ENCODE measurements at regions of chr16 and their contacts with region 1.

Region 1: GRCh38 chr16:68843482-68844210 is at the start of gene TANGO6:
- DNase-seq: peak; percentile 41
- ATAC-seq: peak; percentile 95
- H3K4me3 ChIP-seq: peak within 1 kb of the TSS; percentile 88
- H3K27ac ChIP-seq: peak within 1 kb of the TSS; percentile 91
- H3K4me1 ChIP-seq: peaks cover 9% of the 10 kb centered on the region
- H3K27me3 ChIP-seq: no peaks in the 10 kb centered on the region
- CTCF ChIP-seq: peak; percentile 36 to 43 (median 38); a peak in 4 of 6 replicates
- EP300 ChIP-seq: no peak
- POLR2A ChIP-seq: peak; percentile 97
- RAD21 ChIP-seq: no peak
- polyA plus RNA-seq, gene TANGO6: 1.1 to 2.0 TPM

Region 2: GRCh38 chr16:68244903-68245853 is 598.5 kb before region 1 on chr16 and contains the start of gene PLA2G15:
- CTCF ChIA-PET with region 1: no interaction called
- POLR2A ChIA-PET with region 1: no interaction called
- RAD21 ChIA-PET with region 1: no interaction called
- SMC1A ChIA-PET with region 1: no interaction called
- in situ Hi-C with region 1: no loop called
- intact Hi-C with region 1: loop called (anchors 5 kb)
- DNase-seq: no peak
- ATAC-seq: peak; percentile 98
- H3K4me3 ChIP-seq: peak within 1 kb of the TSS; percentile 97
- H3K27ac ChIP-seq: peak within 1 kb of the TSS; percentile 5; the same call in 1 of the 2 replicates
- H3K4me1 ChIP-seq: peaks cover 18% of the 10 kb centered on the region
- H3K27me3 ChIP-seq: no peaks in the 10 kb centered on the region
- CTCF ChIP-seq: no peak
- EP300 ChIP-seq: 0 out of 4 replicates have a peak, but pooled peaks of 1 of the 2 experiments have one; percentile 22
- POLR2A ChIP-seq: peak; percentile 87
- RAD21 ChIP-seq: no peak
- polyA plus RNA-seq, gene PLA2G15: 0.31 to 1.1 TPM

Region 3: DNA sequence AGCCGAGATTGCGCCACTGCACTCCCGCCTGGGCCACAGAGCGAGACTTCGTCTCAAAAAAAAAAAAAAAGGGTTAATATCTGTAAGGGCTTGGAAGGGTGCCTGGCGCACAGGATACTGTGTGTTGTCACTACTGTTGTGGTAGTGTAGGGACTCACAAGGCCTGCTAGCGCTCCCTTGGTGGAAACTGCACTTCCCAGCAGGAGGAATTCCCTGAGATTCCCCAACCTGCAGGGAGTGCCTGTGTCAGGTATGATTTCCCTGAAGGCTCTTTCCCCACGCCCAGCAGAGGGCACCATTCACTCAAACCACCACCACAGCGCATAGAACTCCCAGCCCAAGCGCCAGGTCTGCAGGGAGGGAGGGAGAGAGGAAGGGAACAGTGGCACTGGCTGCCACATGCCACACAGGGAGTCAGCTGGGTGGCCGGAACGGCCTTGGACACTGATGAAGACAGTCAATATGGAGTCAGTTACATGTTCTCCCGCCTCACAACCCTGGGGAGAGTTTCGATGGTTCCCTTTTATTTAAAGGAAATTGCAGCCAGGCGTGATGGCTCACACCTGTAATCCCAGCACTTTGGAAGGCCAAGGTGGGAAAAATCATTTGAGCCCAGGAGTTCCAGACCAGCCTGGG is 139.3 kb before region 1 on chr16:
- CTCF ChIA-PET with region 1: no interaction called
- POLR2A ChIA-PET with region 1: no interaction called
- RAD21 ChIA-PET with region 1: interaction called, 3 read pairs
- SMC1A ChIA-PET with region 1: no interaction called
- in situ Hi-C with region 1: no loop called
- intact Hi-C with region 1: loop called (anchors 1 kb)
- DNase-seq: no peak
- ATAC-seq: peak; percentile 93
- H3K4me3 ChIP-seq: no peak overlapping the region
- H3K27ac ChIP-seq: no peak overlapping the region
- H3K4me1 ChIP-seq: peaks cover 3% of the 10 kb centered on the region; the same call in 1 of the 2 replicates
- H3K27me3 ChIP-seq: no peaks in the 10 kb centered on the region
- CTCF ChIP-seq: peak; percentile 82 to 89 (median 87)
- EP300 ChIP-seq: no peak
- POLR2A ChIP-seq: no peak
- RAD21 ChIP-seq: peak; percentile 98

Region 4: DNA sequence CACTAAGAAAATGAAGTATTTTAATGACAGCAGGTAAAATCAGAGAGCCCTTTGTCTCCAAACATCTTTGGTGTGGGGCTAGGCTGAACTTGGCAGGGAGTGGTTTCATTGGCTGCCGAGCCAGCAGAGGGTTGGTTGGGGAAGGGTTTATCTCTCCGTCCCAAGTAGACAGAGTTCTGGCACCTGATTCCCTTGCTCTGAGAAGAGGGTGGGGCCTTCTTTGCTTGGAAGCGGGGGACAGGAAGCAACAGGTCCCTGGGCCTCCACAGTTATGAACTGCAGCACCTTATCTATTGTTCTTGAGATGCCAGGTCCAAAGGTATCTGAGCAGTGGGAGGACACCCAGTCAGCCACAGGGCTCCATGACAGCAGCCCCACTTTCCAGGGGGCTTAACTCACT is 118.8 kb before region 1 on chr16:
- CTCF ChIA-PET with region 1: no interaction called
- POLR2A ChIA-PET with region 1: no interaction called
- RAD21 ChIA-PET with region 1: no interaction called
- SMC1A ChIA-PET with region 1: no interaction called
- in situ Hi-C with region 1: no loop called
- intact Hi-C with region 1: no loop called
- DNase-seq: no peak
- ATAC-seq: no peak
- H3K4me3 ChIP-seq: no peak overlapping the region
- H3K27ac ChIP-seq: no peak overlapping the region
- H3K4me1 ChIP-seq: peaks cover 13% of the 10 kb centered on the region
- H3K27me3 ChIP-seq: no peaks in the 10 kb centered on the region
- CTCF ChIP-seq: no peak
- EP300 ChIP-seq: no peak
- POLR2A ChIP-seq: no peak
- RAD21 ChIP-seq: no peak

Region 5: DNA sequence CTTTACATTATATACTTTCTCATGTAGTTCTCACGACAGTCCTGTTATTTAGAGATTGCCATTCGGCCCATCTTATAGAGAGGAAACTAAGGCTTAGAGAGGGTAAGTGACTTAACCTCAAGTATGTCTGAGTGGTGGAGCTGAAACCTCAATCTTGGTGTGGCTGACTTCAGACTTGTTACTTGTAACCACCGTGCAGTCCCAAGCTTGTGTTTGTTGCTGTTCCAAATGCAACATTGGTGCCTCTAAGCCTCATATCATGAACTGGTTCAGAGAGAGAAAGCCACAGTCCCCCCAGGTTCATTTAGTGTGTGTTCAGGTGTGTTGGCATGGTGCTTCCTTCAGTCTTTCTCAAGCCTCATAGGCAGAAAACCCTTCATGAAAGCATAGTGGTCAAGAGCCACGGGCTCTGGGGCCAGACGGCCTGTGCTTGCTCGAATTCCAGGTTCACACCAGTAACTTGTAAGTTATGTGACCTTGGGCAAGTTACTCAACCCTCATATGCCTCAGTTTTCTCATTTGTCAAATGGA is 66.8 kb before region 1 on chr16:
- CTCF ChIA-PET with region 1: no interaction called
- POLR2A ChIA-PET with region 1: no interaction called
- RAD21 ChIA-PET with region 1: no interaction called
- SMC1A ChIA-PET with region 1: no interaction called
- in situ Hi-C with region 1: no loop called
- intact Hi-C with region 1: no loop called
- DNase-seq: peak; percentile 92
- ATAC-seq: peak; percentile 90
- H3K4me3 ChIP-seq: no peak overlapping the region
- H3K27ac ChIP-seq: peak overlapping the region; percentile 69
- H3K4me1 ChIP-seq: peaks cover 38% of the 10 kb centered on the region
- H3K27me3 ChIP-seq: no peaks in the 10 kb centered on the region
- CTCF ChIP-seq: no peak
- EP300 ChIP-seq: peak in 1 of 2 experiments; percentile 81; a peak in 3 of 4 replicates
- POLR2A ChIP-seq: no peak
- RAD21 ChIP-seq: no peak

Region 6: GRCh38 chr16:68857479-68857878 is 13.8 kb after region 1 on chr16:
- CTCF ChIA-PET with region 1: interaction called, 11 read pairs
- POLR2A ChIA-PET with region 1: no interaction called
- RAD21 ChIA-PET with region 1: no interaction called
- SMC1A ChIA-PET with region 1: interaction called, 5 read pairs
- in situ Hi-C with region 1: no loop called
- intact Hi-C with region 1: no loop called
- DNase-seq: no peak
- ATAC-seq: no peak
- H3K4me3 ChIP-seq: no peak overlapping the region
- H3K27ac ChIP-seq: no peak overlapping the region
- H3K4me1 ChIP-seq: no peaks in the 10 kb centered on the region
- H3K27me3 ChIP-seq: no peaks in the 10 kb centered on the region
- CTCF ChIP-seq: no peak
- EP300 ChIP-seq: no peak
- POLR2A ChIP-seq: no peak
- RAD21 ChIP-seq: no peak

Region 7: GRCh38 chr16:68866933-68867332 is 23.3 kb after region 1 on chr16:
- CTCF ChIA-PET with region 1: interaction called, 7 read pairs
- POLR2A ChIA-PET with region 1: interaction called, 11 read pairs
- RAD21 ChIA-PET with region 1: interaction called, 3 read pairs
- SMC1A ChIA-PET with region 1: interaction called, 5 read pairs
- in situ Hi-C with region 1: no loop called
- intact Hi-C with region 1: no loop called
- DNase-seq: no peak
- ATAC-seq: no peak
- H3K4me3 ChIP-seq: no peak overlapping the region
- H3K27ac ChIP-seq: no peak overlapping the region
- H3K4me1 ChIP-seq: peaks cover 12% of the 10 kb centered on the region; the same call in 1 of the 2 replicates
- H3K27me3 ChIP-seq: no peaks in the 10 kb centered on the region
- CTCF ChIP-seq: no peak
- EP300 ChIP-seq: no peak
- POLR2A ChIP-seq: no peak
- RAD21 ChIP-seq: no peak

Region 8: GRCh38 chr16:68902008-68902968 is 58.6 kb after region 1 on chr16:
- CTCF ChIA-PET with region 1: interaction called, 9 read pairs
- POLR2A ChIA-PET with region 1: no interaction called
- RAD21 ChIA-PET with region 1: interaction called, 4 read pairs
- SMC1A ChIA-PET with region 1: interaction called, 3 read pairs
- in situ Hi-C with region 1: no loop called
- intact Hi-C with region 1: loop called (anchors 2 kb)
- DNase-seq: no peak
- ATAC-seq: peak; percentile 68
- H3K4me3 ChIP-seq: no peak overlapping the region
- H3K27ac ChIP-seq: no peak overlapping the region
- H3K4me1 ChIP-seq: no peaks in the 10 kb centered on the region
- H3K27me3 ChIP-seq: no peaks in the 10 kb centered on the region
- CTCF ChIP-seq: peak; percentile 54 to 61 (median 54); a peak in 5 of 6 replicates
- EP300 ChIP-seq: no peak
- POLR2A ChIP-seq: no peak
- RAD21 ChIP-seq: peak; percentile 79

Region 9: GRCh38 chr16:68978271-68978954 is 134.8 kb after region 1 on chr16:
- CTCF ChIA-PET with region 1: no interaction called
- POLR2A ChIA-PET with region 1: no interaction called
- RAD21 ChIA-PET with region 1: no interaction called
- SMC1A ChIA-PET with region 1: no interaction called
- in situ Hi-C with region 1: no loop called
- intact Hi-C with region 1: no loop called
- DNase-seq: no peak
- ATAC-seq: no peak
- H3K4me3 ChIP-seq: no peak overlapping the region
- H3K27ac ChIP-seq: no peak overlapping the region
- H3K4me1 ChIP-seq: no peaks in the 10 kb centered on the region
- H3K27me3 ChIP-seq: no peaks in the 10 kb centered on the region
- CTCF ChIP-seq: no peak
- EP300 ChIP-seq: no peak
- POLR2A ChIP-seq: no peak
- RAD21 ChIP-seq: no peak

Region 10: GRCh38 chr16:69132424-69133252 is 289.0 kb after region 1 on chr16 and contains the starts of genes CHTF8 and UTP4:
- CTCF ChIA-PET with region 1: interaction called, 10 read pairs
- POLR2A ChIA-PET with region 1: interaction called, 9 read pairs
- RAD21 ChIA-PET with region 1: interaction called, 6 read pairs
- SMC1A ChIA-PET with region 1: no interaction called
- in situ Hi-C with region 1: no loop called
- intact Hi-C with region 1: no loop called
- DNase-seq: no peak
- ATAC-seq: peak; percentile 93
- H3K4me3 ChIP-seq: peak within 1 kb of the TSS; percentile 95
- H3K27ac ChIP-seq: peak within 1 kb of the TSS; percentile 96
- H3K4me1 ChIP-seq: peaks cover 2% of the 10 kb centered on the region; the same call in 1 of the 2 replicates
- H3K27me3 ChIP-seq: no peaks in the 10 kb centered on the region
- CTCF ChIP-seq: no peak
- EP300 ChIP-seq: no peak
- POLR2A ChIP-seq: peak; percentile 99
- RAD21 ChIP-seq: no peak
- polyA plus RNA-seq, gene CHTF8: 18.5 to 52.7 TPM
- polyA plus RNA-seq, gene UTP4: 52.5 to 85.8 TPM

Measured in GM12878 (cell line).